ENCODE measurements at regions of chr1 and their contacts with region 1.

Region 1: DNA sequence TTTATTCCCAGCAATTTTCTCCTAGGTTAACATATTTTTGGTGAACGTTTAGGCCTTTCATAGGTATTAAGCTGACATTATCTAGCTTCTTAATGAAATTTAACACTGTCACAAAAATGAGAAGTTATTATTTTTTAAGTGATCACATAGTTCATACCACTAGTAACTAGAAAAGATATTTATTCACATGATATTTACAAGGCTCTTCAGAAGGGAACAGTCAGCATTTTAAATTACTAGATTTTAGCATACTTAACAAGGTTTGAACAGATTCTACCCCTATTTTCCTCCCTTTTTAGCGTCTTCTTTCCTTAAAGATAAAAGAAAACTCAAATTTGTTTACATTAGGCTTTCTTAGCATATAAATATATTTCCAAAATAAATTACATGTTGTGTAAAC is 65.5 kb upstream of the B3GALT2 start:
- DNase-seq: no peak
- H3K4me3 Mint-ChIP-seq: no peak overlapping the region
- H3K27ac Mint-ChIP-seq: no peak overlapping the region
- H3K4me1 Mint-ChIP-seq: no peaks in the 10 kb centered on the region
- H3K27me3 Mint-ChIP-seq: no peaks in the 10 kb centered on the region
- CTCF ChIP-seq: no peak

Region 2: DNA sequence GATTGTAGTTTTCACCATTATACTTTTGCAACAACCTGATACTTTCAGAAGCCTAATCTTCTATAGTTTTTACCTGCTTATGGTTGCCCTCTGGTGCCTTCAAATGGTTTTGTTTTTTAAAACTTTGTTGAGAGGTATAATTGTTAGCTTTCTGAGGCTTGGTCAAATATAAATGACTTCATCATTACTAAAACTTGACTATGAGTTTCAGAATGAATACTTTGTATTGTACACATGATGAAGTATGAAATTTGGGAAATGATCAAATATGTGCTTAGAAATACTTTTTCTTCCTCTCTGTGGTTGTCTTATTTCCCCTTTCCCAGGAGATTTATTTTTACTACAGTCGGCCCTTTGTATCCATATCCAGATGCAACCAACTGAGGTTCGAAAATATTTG is 86.2 kb after region 1 on chr1:
- CTCF ChIA-PET with region 1: no interaction called
- intact Hi-C with region 1: loop called (anchors 2 kb)
- DNase-seq: no peak
- H3K4me3 Mint-ChIP-seq: no peak overlapping the region
- H3K27ac Mint-ChIP-seq: no peak overlapping the region
- H3K4me1 Mint-ChIP-seq: peaks cover 29% of the 10 kb centered on the region
- H3K27me3 Mint-ChIP-seq: no peaks in the 10 kb centered on the region
- CTCF ChIP-seq: peak; percentile 24

Measured in Calu3 (cell line).